Activated B cell treated with CpG ODN at 0.5 μM for 24 hours (primary cell): ENCODE measurements at regions of chr11 and their contacts with region 1.

Region 1: GRCh38 chr11:85664615-85665481 is at the start of gene CREBZF:
- DNase-seq: peak; percentile 96
- ATAC-seq: peak; percentile 86
- H3K4me3 Mint-ChIP-seq: peak within 1 kb of the TSS; percentile 95
- H3K27ac Mint-ChIP-seq: peak within 1 kb of the TSS; percentile 93
- H3K4me1 Mint-ChIP-seq: peaks cover 45% of the 10 kb centered on the region
- H3K27me3 Mint-ChIP-seq: no peaks in the 10 kb centered on the region
- CTCF ChIP-seq: no peak
- total RNA-seq, gene CREBZF: 46.1 and 60.3 TPM in 2 replicates

Region 2: DNA sequence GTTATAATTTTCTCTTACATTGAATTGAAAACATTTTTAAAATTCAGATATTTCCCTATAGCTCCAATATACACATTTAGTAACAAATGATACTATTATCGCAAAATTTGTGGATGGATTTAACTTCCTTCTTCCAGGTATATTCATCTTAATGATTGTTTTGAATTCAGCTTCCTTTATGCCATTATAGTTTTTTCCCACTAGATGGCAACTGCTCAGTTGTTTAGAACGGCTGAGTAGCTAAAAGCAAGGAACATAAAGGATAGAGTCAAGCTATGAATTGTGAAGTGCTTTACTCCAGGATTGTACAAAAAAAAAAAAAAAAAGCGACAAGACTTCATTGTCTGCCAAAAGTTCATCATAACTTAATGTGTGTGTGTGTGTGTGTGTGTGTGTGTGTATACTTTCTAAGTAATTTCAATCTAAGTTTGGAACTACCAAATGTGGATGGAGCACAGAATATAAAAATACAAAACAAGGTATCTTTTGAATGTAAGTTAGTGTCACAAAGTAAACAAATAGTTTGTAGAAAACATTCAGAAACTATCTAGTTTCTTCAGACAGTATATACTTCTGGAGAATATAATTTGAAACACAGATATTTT is 884.1 kb before region 1 on chr11:
- CTCF ChIA-PET with region 1: no interaction called
- POLR2A ChIA-PET with region 1: no interaction called
- intact Hi-C with region 1: loop called (anchors 1 kb)
- DNase-seq: no peak
- ATAC-seq: no peak
- H3K4me3 Mint-ChIP-seq: no peak overlapping the region
- H3K27ac Mint-ChIP-seq: no peak overlapping the region
- H3K4me1 Mint-ChIP-seq: no peaks in the 10 kb centered on the region
- H3K27me3 Mint-ChIP-seq: no peaks in the 10 kb centered on the region
- CTCF ChIP-seq: no peak

Region 3: GRCh38 chr11:85316967-85317366 is 347.9 kb before region 1 on chr11:
- CTCF ChIA-PET with region 1: no interaction called
- POLR2A ChIA-PET with region 1: no interaction called
- intact Hi-C with region 1: loop called (anchors 10 kb)
- DNase-seq: no peak
- ATAC-seq: peak; percentile 95
- H3K4me3 Mint-ChIP-seq: peak overlapping the region; percentile 47
- H3K27ac Mint-ChIP-seq: peak overlapping the region; percentile 80
- H3K4me1 Mint-ChIP-seq: peaks cover 59% of the 10 kb centered on the region
- H3K27me3 Mint-ChIP-seq: no peaks in the 10 kb centered on the region
- CTCF ChIP-seq: no peak

Region 4: GRCh38 chr11:85551881-85552280 is 113.0 kb before region 1 on chr11:
- CTCF ChIA-PET with region 1: no interaction called
- POLR2A ChIA-PET with region 1: no interaction called
- intact Hi-C with region 1: no loop called
- DNase-seq: no peak
- ATAC-seq: no peak
- H3K4me3 Mint-ChIP-seq: no peak overlapping the region
- H3K27ac Mint-ChIP-seq: no peak overlapping the region
- H3K4me1 Mint-ChIP-seq: no peaks in the 10 kb centered on the region
- H3K27me3 Mint-ChIP-seq: peaks cover 4% of the 10 kb centered on the region
- CTCF ChIP-seq: no peak

Region 5: GRCh38 chr11:85647604-85648299 is 17.1 kb before region 1 on chr11 and contains the start of gene TMEM126A:
- CTCF ChIA-PET with region 1: interaction called, 3 read pairs
- POLR2A ChIA-PET with region 1: interaction called, 70 read pairs
- intact Hi-C with region 1: loop called (anchors 1 kb)
- DNase-seq: peak; percentile 77
- ATAC-seq: peak; percentile 99
- H3K4me3 Mint-ChIP-seq: peak within 1 kb of the TSS; percentile 98
- H3K27ac Mint-ChIP-seq: peak within 1 kb of the TSS; percentile 91
- H3K4me1 Mint-ChIP-seq: peaks cover 22% of the 10 kb centered on the region
- H3K27me3 Mint-ChIP-seq: peaks cover 10% of the 10 kb centered on the region
- CTCF ChIP-seq: no peak
- total RNA-seq, gene TMEM126A: 31.9 and 32.7 TPM in 2 replicates

Region 6: DNA sequence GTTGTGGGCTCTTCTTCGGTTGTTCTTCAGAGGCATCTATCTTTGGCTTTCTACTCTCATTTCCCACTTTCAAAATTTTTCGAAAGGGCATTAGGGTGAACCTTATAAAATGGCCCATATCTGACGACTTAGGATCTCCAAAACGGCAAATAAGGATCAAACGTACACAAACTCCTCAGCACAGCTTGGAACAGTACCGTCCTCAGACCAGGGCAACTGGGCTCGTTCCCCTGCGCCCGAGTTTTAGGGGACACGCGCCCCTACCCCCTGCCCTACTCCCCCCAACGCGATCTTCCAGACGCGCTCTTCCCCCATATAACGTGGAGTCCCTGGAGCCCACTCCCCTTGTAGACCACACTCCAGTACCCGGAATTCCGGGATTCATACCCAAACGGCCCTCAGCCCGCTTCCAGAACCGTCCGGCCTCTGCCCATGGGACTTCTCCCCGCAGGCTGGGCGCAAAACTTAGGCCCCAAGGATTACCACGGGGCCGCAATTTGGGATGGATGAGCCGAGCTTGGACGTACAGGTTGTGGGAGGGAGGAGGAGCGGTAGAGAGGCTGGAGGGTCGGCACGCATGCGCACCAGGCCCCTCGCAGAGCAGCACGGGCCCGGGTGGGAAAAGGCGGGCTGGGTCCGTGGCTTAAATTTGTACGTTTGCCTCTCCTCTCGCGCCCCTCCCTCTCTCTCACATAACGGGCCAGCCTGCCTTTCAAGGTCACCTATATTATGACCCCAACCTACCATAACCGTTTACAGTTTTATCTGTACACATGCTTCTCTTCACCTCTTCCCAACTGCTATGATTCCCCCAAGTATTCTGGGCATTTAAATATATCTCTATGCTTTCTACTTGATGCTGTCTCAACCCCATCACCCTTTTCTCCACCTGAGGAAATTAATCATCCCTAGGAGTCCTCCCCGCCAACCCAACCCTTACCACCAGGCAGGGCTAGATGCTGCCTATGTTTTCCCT is 17.8 kb after region 1 on chr11:
- CTCF ChIA-PET with region 1: no interaction called
- POLR2A ChIA-PET with region 1: interaction called, 9 read pairs
- intact Hi-C with region 1: loop called (anchors 1 kb)
- DNase-seq: peak; percentile 55
- ATAC-seq: peak; percentile 97
- H3K4me3 Mint-ChIP-seq: peak overlapping the region; percentile 87
- H3K27ac Mint-ChIP-seq: peak overlapping the region; percentile 69
- H3K4me1 Mint-ChIP-seq: peaks cover 11% of the 10 kb centered on the region
- H3K27me3 Mint-ChIP-seq: peaks cover 8% of the 10 kb centered on the region
- CTCF ChIP-seq: no peak

Region 7: DNA sequence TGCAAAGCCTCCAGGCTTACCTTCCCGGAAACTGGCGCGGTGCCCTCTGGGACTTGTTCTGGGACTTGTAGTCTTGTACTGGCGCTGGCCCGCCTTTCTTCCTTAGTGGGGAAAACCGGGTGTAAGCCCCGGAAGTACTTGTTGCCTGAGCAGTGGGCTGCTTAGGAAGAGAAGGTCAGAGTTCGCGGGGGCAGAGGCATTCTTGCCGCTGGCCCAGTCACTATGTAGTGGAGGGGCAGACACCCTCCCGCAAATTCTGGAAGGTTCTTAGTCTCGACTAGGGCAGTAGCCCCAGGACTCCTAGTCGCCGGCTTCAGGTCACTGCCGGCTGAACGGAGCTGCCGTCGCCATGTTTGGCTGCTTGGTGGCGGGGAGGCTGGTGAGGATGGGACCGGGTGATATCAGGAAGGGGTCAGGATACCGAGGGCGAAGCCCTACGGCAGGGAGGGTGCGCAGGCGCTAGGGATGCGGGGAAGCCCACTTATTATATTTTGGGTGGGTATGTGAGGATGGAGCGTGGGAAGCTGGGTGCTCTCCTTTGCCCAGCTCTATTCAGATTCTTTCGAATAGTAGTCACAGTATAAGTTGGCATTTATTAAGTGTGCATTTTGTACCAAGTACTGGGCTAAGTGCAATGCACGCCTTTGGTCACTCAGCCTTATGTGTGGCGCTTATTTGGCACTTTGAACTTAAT is 637.4 kb after region 1 on chr11 and contains the start of gene HIKESHI:
- CTCF ChIA-PET with region 1: no interaction called
- POLR2A ChIA-PET with region 1: no interaction called
- intact Hi-C with region 1: loop called (anchors 2 kb)
- DNase-seq: peak; percentile 72
- ATAC-seq: peak; percentile 98
- H3K4me3 Mint-ChIP-seq: peak within 1 kb of the TSS; percentile 99
- H3K27ac Mint-ChIP-seq: peak within 1 kb of the TSS; percentile 94
- H3K4me1 Mint-ChIP-seq: peaks cover 27% of the 10 kb centered on the region
- H3K27me3 Mint-ChIP-seq: no peaks in the 10 kb centered on the region
- CTCF ChIP-seq: no peak
- total RNA-seq, gene HIKESHI: 33.8 and 35.6 TPM in 2 replicates